Breast epithelium (tissue), 4 donors: ENCODE measurements at regions of chr19 and their contacts with region 1.

Region 1: GRCh38 chr19:14089662-14090508 is 666 bp downstream of the SAMD1 start:
- DNase-seq: no peak
- H3K4me3 ChIP-seq: peak overlapping the region; percentile 69 to 90 (median 87)
- H3K27ac ChIP-seq: peak overlapping the region; percentile 40 to 65
- H3K4me1 ChIP-seq: no peaks in the 10 kb centered on the region
- H3K27me3 ChIP-seq: no peaks in the 10 kb centered on the region
- CTCF ChIP-seq: peak in 1 of 3 donors; percentile 16
- POLR2A ChIP-seq: no peak

Region 2: GRCh38 chr19:14031719-14032480 is 58.0 kb before region 1 on chr19 and contains the start of gene IL27RA:
- intact Hi-C with region 1: no loop called
- DNase-seq: peak in 1 of 2 donors; percentile 36
- H3K4me3 ChIP-seq: peak within 1 kb of the TSS; percentile 57 to 78 (median 66)
- H3K27ac ChIP-seq: peak within 1 kb of the TSS; percentile 75 to 79
- H3K4me1 ChIP-seq: peaks cover 0 to 4% of the 10 kb centered on the region in 2 donors
- H3K27me3 ChIP-seq: no peaks in the 10 kb centered on the region
- CTCF ChIP-seq: peak in 2 of 3 donors; percentile 38 to 68
- POLR2A ChIP-seq: no peak
- total RNA-seq, gene IL27RA: 5.1 to 11.0 (median 5.2) TPM

Region 3: GRCh38 chr19:14056741-14057356 is 33.0 kb before region 1 on chr19:
- intact Hi-C with region 1: no loop called
- DNase-seq: no peak
- H3K4me3 ChIP-seq: peak overlapping the region; percentile 24 to 70 (median 54)
- H3K27ac ChIP-seq: peak overlapping the region; percentile 13 to 52
- H3K4me1 ChIP-seq: peaks cover 6 to 8% of the 10 kb centered on the region in 2 donors
- H3K27me3 ChIP-seq: no peaks in the 10 kb centered on the region
- CTCF ChIP-seq: no peak
- POLR2A ChIP-seq: no peak

Region 4: DNA sequence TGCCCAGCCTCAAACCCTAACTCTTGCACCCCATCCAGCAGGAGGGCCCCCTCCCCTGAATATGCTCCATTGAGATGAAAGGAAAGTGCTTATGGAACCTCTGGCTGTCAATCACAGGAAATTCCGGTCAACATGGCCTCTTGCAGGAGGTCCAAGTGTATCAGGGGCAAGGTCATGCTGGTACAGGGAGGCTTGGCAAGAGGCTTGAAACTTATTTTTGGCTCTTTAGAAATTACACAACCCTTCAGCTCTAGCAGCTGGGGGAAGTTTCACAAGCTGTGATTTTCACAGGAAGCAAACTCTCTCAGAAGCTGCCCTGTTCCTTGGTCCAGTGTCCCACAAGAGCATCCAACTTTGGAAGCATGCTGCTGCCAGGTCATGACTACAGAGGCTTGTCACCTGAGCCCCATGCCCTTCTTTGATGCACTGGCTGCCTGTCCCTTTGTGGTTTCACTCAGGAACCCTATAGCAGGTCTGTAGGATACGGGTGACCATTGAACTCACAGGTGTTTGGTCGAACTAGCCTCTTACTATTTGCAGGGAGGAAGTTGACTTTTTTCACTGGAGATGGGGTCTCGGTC is 38.1 kb after region 1 on chr19:
- intact Hi-C with region 1: no loop called
- DNase-seq: no peak
- H3K4me3 ChIP-seq: no peak overlapping the region
- H3K27ac ChIP-seq: no peak overlapping the region
- H3K4me1 ChIP-seq: no peaks in the 10 kb centered on the region
- H3K27me3 ChIP-seq: no peaks in the 10 kb centered on the region
- CTCF ChIP-seq: no peak
- POLR2A ChIP-seq: no peak

Region 5: DNA sequence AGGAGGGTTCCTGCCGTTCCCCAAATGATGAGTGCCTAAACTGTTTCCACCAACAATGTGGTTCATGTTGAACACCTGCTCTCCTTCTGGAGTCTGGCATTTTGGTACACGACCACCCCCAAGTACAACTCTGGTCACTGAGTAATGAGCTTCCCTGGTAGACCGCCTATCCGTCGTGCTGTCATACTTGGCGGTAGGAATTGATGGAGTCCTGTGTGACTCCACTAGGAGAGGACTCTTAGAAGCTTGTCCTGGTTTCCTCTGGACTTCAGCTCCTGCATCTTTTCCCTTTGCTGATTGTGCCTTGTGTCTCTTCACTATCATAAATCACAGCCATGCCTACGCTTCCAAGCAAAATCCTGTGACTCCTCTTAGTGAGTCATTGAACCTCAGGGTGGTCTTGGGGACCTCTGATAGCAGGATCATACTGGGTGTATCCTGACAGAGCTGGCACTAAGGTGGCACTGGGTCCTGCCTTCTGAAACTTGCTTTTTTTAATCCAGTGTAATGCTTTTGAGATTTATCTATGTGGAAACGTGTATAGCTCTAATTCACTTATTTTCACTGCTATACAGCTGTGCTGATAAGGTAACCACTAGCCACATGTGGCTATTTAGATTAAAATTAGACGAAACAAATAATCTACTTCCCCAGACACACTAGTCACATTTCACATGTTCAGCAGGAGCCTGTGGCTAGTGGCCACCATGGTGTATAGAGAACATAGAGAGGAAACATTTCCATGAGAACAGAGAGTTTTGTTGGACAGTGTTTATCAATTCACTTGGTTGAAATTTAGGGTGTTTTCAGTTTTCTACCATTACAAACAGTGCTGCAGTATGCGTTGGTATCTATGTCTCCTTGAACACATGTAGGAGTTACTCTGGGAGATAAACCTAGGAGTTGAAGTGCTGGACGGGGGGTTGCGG is 52.6 kb after region 1 on chr19:
- intact Hi-C with region 1: loop called (anchors 2 kb)
- DNase-seq: no peak
- H3K4me3 ChIP-seq: no peak overlapping the region
- H3K27ac ChIP-seq: no peak overlapping the region
- H3K4me1 ChIP-seq: peaks cover 0 to 3% of the 10 kb centered on the region in 2 donors
- H3K27me3 ChIP-seq: no peaks in the 10 kb centered on the region
- CTCF ChIP-seq: no peak
- POLR2A ChIP-seq: no peak